Activated CD4-positive, alpha-beta T cell treated with anti-CD3 and anti-CD28 coated beads for 36 hours (primary cell): ENCODE measurements at regions of chr3 and their contacts with region 1.

Region 1: DNA sequence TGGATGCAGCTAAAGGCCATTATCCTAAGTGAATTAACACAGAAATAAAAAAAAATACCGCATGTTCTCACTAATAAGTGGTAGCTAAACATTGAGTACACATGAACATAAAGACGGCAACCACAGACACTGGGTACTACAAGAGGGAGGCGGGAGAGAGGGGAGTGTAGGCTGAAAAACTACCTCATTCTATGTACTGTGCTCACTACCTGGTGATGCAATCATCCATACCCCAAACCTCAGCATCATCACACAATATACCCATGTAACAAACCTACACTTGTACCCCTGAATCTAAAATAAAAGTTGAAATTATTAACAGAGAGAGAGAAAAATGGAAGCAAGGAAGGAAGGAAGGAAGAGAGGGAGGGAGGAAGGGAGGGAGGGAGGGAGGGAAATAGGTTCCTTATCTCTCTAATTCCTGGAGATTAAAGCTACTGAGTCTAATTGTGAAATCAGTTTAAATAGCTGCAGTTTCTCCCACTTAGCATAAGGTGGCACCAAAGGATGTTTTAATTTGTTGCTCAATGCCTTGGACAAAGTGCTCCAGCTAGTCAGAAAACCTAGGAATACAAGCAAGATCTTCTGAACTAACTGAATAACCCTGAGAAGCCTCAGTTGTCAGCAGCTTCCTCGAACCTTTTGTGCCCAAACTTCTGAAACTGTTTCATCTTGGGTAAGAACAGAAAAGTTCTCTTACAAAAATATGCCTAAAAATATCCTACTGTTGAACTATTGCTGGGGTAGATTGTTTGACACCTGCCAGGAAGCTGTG is 79.4 kb upstream of the ATP11B start:
- DNase-seq: no peak
- ATAC-seq: peak; percentile 66
- H3K4me3 Mint-ChIP-seq: no peak overlapping the region
- H3K27ac Mint-ChIP-seq: no peak overlapping the region
- H3K4me1 Mint-ChIP-seq: peaks cover 8% of the 10 kb centered on the region
- H3K27me3 Mint-ChIP-seq: peaks cover 3% of the 10 kb centered on the region

Region 2: DNA sequence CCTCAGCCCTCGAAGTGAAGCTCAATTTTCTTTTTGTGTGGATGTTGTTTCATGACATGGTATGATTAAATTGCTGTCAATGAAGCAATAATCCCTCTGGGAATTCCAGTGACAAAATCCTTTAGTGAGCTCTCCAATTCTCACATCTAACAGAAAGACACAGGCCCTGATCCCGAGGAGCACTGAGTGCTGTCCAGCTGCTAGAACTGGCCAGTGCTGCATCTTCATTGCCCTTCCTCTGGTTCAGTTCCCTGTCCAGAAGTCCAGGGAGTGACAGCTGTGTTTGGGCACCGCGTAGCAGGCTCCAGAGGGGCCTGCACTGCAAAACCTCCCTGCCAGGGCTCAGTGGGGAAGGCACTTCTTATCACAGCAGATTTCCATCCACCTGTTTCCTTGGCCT is 437.4 kb before region 1 on chr3:
- CTCF ChIA-PET with region 1: no interaction called
- POLR2A ChIA-PET with region 1: no interaction called
- intact Hi-C with region 1: no loop called
- DNase-seq: no peak
- ATAC-seq: no peak
- H3K4me3 Mint-ChIP-seq: no peak overlapping the region
- H3K27ac Mint-ChIP-seq: no peak overlapping the region
- H3K4me1 Mint-ChIP-seq: no peaks in the 10 kb centered on the region
- H3K27me3 Mint-ChIP-seq: peaks cover 2% of the 10 kb centered on the region

Region 3: GRCh38 chr3:182725372-182726251 is 11.7 kb after region 1 on chr3:
- CTCF ChIA-PET with region 1: interaction called, 14 read pairs
- POLR2A ChIA-PET with region 1: no interaction called
- intact Hi-C with region 1: no loop called
- DNase-seq: no peak
- ATAC-seq: no peak
- H3K4me3 Mint-ChIP-seq: no peak overlapping the region
- H3K27ac Mint-ChIP-seq: no peak overlapping the region
- H3K4me1 Mint-ChIP-seq: no peaks in the 10 kb centered on the region
- H3K27me3 Mint-ChIP-seq: peaks cover 4% of the 10 kb centered on the region

Region 4: GRCh38 chr3:182837855-182838454 is 124.0 kb after region 1 on chr3:
- CTCF ChIA-PET with region 1: interaction called, 29 read pairs
- POLR2A ChIA-PET with region 1: no interaction called
- intact Hi-C with region 1: loop called (anchors 1 kb)
- DNase-seq: no peak
- ATAC-seq: no peak
- H3K4me3 Mint-ChIP-seq: no peak overlapping the region
- H3K27ac Mint-ChIP-seq: no peak overlapping the region
- H3K4me1 Mint-ChIP-seq: peaks cover 6% of the 10 kb centered on the region
- H3K27me3 Mint-ChIP-seq: no peaks in the 10 kb centered on the region

Region 5: DNA sequence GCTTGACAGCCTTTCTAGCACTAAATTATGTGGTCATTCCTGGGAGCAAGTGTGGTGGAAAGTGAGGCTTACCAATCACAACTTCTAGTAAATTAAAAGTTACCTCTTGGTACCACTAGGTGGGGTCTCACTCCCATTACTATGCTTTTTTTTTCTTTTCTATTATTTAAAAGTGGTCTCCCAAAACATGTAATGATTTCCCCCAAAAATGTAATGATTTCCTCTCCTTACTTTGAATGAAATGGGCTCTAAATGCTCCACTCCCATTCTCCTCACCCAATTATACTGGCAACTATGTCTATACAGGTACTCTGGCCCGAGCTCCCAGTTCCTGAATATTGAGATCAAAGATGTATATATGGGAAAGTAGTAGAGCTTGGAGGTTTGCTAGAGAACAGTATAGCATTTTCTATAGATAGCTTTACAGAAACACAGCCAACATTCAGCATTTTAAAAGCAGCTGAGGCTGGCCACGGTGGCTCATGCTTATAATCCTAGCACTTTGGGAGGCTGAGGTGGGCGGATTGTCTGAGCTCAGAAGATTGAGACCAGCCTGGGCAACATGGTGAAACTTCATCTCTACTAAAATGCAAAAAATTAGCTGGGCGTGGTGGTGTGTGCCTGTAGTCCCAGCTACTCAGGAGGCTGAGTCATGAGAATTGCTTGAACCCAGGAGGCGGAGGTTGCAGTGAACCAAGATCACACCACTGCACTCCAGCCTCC is 195.5 kb after region 1 on chr3:
- CTCF ChIA-PET with region 1: interaction called, 6 read pairs
- POLR2A ChIA-PET with region 1: no interaction called
- intact Hi-C with region 1: loop called in 1 of 2 experiments (anchors 10 kb)
- DNase-seq: no peak
- ATAC-seq: peak; percentile 57
- H3K4me3 Mint-ChIP-seq: no peak overlapping the region
- H3K27ac Mint-ChIP-seq: no peak overlapping the region
- H3K4me1 Mint-ChIP-seq: peaks cover 39% of the 10 kb centered on the region
- H3K27me3 Mint-ChIP-seq: no peaks in the 10 kb centered on the region

Region 6: DNA sequence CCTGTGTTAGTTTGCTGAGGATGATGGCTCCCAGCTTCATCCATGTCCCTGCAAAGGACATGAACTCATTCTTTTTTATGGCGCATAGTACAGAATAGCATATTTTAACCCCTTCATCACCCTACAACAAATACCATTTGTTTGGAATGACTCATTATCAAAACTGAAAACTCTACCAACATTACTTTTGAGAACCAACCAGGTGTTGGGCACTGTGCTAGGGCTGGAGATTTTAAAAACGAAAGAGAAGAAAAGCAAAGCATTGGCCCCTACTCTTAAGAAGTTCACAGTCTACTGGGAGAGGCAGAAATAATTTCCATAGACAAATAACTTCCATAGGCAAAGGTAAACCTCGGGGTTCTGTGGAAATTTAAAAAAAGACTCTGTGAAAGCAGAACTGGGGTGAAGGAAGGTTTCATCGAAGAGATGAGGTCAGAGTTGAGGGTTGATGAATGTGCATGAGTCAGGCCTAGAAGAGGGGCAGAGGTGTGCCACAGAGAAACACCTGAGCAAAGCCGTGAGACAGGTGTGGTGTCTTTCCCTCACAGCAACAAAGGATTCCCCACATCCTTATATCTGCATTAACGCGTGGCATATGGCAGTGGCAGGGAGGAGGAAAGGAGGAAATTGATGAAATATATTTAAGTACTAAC is 663.5 kb after region 1 on chr3:
- CTCF ChIA-PET with region 1: no interaction called
- POLR2A ChIA-PET with region 1: no interaction called
- intact Hi-C with region 1: loop called (anchors 2 to 10 kb)
- DNase-seq: peak; percentile 24
- ATAC-seq: peak; percentile 77
- H3K4me3 Mint-ChIP-seq: no peak overlapping the region
- H3K27ac Mint-ChIP-seq: peak overlapping the region; percentile 58
- H3K4me1 Mint-ChIP-seq: peaks cover 43% of the 10 kb centered on the region
- H3K27me3 Mint-ChIP-seq: no peaks in the 10 kb centered on the region